ENCODE measurements at regions of chr6 and their contacts with region 1.

Region 1: GRCh38 chr6:125191916-125192609 is 38.5 kb downstream of the TPD52L1 start:
- DNase-seq: peak; percentile 52 to 66
- H3K4me3 ChIP-seq: no peak overlapping the region
- H3K4me3 Mint-ChIP-seq: no peak overlapping the region
- H3K27ac Mint-ChIP-seq: no peak overlapping the region
- H3K4me1 ChIP-seq: peaks cover 17% of the 10 kb centered on the region
- H3K4me1 Mint-ChIP-seq: no peaks in the 10 kb centered on the region
- H3K27me3 ChIP-seq: no peaks in the 10 kb centered on the region
- H3K27me3 Mint-ChIP-seq: no peaks in the 10 kb centered on the region
- CTCF ChIP-seq: peak; percentile 59 to 67

Region 2: DNA sequence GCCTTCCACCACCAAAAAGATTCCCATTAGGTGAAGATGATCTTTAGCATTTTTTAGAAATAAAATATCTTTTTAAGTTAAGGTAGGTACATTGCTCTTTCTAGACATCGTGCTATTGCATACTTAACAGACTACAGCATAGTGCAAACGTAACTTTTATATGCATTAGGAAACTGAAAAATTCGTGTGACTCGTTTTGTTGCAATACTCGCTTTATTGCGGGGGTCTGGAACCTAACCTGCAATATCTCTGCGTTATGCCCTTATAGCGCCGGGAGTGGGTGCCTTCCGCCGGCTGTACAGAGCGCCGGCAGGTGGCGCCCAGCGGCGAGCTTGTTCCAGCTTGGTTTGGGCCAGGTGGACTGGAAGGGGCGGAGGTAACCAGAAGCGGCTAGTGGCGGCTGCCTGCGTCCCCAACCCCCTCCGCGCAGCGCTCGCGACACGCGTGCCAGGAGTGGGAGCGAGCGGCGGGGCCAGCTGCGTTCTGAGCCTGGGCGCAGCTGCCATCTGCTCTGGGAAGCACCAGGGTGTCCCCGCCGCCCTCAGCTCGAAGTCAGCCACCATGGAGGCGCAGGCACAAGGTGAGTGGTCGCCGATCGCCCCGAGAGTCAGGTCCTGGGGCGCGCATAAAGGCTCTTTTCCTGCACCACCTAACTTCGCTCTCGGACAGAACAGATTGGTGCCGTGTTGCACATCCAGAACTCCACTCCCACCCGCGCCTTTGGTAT is 38.5 kb before region 1 on chr6 and contains the start of gene TPD52L1:
- CTCF ChIA-PET with region 1: interaction called, 3 read pairs
- POLR2A ChIA-PET with region 1: no interaction called
- intact Hi-C with region 1: loop called (anchors 2 kb)
- DNase-seq: peak; percentile 85
- H3K4me3 ChIP-seq: peak within 1 kb of the TSS; percentile 78
- H3K4me3 Mint-ChIP-seq: peak within 1 kb of the TSS; percentile 81
- H3K27ac Mint-ChIP-seq: peak within 1 kb of the TSS; percentile 42
- H3K4me1 ChIP-seq: no peaks in the 10 kb centered on the region
- H3K4me1 Mint-ChIP-seq: peaks cover 6% of the 10 kb centered on the region
- H3K27me3 ChIP-seq: no peaks in the 10 kb centered on the region
- H3K27me3 Mint-ChIP-seq: peaks cover 8% of the 10 kb centered on the region
- CTCF ChIP-seq: peak; percentile 79 to 97
- total RNA-seq, gene TPD52L1: 60.1 and 83.9 TPM in 2 replicates

Region 3: DNA sequence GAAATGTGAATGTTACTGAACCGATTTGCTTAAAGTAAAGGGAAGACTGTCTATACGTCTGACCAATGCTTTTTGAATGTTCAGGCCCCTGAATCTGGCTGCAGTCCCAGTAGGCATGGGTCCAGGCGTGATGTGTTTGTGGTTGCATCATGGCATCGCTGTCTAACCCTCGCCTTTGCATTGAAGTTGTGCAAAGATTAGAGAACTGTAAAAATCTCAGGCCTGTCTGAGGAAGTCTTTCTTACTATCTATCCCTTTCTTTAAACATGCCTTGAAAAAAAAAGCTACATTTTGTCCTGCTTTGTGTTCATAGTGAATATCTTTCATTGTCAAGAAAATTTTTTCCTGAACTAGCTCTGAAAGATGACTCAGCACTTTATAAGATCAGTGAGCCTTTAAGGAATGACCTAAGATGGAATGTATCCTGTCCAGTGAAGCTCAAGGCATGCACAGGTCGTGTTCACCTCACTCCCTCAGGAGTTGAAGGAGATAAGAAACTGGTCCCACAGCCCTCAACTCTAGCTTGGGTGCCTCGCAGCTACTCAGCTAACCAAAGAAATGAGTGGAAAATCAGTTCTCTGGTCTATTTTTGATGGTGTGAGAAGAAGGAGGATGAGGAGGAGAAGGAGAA is 10.0 kb after region 1 on chr6:
- CTCF ChIA-PET with region 1: interaction called, 3 read pairs
- POLR2A ChIA-PET with region 1: no interaction called
- intact Hi-C with region 1: loop called (anchors 1 kb)
- DNase-seq: peak; percentile 59 to 81
- H3K4me3 ChIP-seq: no peak overlapping the region
- H3K4me3 Mint-ChIP-seq: peak overlapping the region; percentile 25
- H3K27ac Mint-ChIP-seq: peak overlapping the region; percentile 55
- H3K4me1 ChIP-seq: peaks cover 36% of the 10 kb centered on the region
- H3K4me1 Mint-ChIP-seq: peaks cover 25% of the 10 kb centered on the region
- H3K27me3 ChIP-seq: no peaks in the 10 kb centered on the region
- H3K27me3 Mint-ChIP-seq: no peaks in the 10 kb centered on the region
- CTCF ChIP-seq: no peak

Region 4: GRCh38 chr6:125213939-125214338 is 21.9 kb after region 1 on chr6:
- CTCF ChIA-PET with region 1: no interaction called
- POLR2A ChIA-PET with region 1: no interaction called
- intact Hi-C with region 1: loop called (anchors 1 kb)
- DNase-seq: no peak
- H3K4me3 ChIP-seq: no peak overlapping the region
- H3K4me3 Mint-ChIP-seq: no peak overlapping the region
- H3K27ac Mint-ChIP-seq: no peak overlapping the region
- H3K4me1 ChIP-seq: peaks cover 4% of the 10 kb centered on the region; the same call in 1 of the 2 replicates
- H3K4me1 Mint-ChIP-seq: no peaks in the 10 kb centered on the region
- H3K27me3 ChIP-seq: no peaks in the 10 kb centered on the region
- H3K27me3 Mint-ChIP-seq: no peaks in the 10 kb centered on the region
- CTCF ChIP-seq: no peak

Region 5: DNA sequence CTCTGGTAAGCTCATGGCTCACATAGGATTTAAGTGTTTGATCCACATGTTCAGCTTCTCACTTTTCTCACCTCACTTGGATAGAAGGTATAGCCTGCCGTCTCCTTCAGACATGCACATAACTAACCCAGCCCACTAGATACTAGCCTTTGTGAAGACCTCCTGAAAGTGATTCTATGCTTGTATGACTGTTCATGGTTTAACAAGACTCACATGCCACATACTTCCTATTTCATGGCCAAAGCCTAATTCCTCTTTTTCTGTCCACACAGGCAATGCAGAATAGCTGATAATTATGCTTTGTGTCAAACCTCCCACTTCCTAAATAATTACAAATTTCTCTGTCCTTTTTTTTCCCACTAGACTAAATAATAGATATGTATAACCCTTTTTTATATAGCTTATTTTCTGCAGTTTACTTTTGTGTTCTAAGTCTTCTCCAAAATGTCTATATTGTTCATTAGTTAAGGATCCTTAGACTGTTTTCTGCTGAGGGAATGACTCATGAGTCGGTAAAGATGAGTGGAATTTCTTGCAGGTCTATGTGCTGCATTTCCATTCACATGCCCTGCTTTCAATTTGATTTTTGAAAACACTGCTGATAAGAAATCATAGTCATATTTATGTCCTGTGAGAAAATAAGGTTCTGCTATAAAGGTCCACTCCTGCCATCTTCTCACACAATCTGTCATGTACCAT is 66.7 kb after region 1 on chr6:
- CTCF ChIA-PET with region 1: no interaction called
- POLR2A ChIA-PET with region 1: no interaction called
- intact Hi-C with region 1: loop called (anchors 5 kb)
- DNase-seq: no peak
- H3K4me3 ChIP-seq: no peak overlapping the region
- H3K4me3 Mint-ChIP-seq: no peak overlapping the region
- H3K27ac Mint-ChIP-seq: no peak overlapping the region
- H3K4me1 ChIP-seq: no peaks in the 10 kb centered on the region
- H3K4me1 Mint-ChIP-seq: no peaks in the 10 kb centered on the region
- H3K27me3 ChIP-seq: no peaks in the 10 kb centered on the region
- H3K27me3 Mint-ChIP-seq: no peaks in the 10 kb centered on the region
- CTCF ChIP-seq: no peak

Region 6: DNA sequence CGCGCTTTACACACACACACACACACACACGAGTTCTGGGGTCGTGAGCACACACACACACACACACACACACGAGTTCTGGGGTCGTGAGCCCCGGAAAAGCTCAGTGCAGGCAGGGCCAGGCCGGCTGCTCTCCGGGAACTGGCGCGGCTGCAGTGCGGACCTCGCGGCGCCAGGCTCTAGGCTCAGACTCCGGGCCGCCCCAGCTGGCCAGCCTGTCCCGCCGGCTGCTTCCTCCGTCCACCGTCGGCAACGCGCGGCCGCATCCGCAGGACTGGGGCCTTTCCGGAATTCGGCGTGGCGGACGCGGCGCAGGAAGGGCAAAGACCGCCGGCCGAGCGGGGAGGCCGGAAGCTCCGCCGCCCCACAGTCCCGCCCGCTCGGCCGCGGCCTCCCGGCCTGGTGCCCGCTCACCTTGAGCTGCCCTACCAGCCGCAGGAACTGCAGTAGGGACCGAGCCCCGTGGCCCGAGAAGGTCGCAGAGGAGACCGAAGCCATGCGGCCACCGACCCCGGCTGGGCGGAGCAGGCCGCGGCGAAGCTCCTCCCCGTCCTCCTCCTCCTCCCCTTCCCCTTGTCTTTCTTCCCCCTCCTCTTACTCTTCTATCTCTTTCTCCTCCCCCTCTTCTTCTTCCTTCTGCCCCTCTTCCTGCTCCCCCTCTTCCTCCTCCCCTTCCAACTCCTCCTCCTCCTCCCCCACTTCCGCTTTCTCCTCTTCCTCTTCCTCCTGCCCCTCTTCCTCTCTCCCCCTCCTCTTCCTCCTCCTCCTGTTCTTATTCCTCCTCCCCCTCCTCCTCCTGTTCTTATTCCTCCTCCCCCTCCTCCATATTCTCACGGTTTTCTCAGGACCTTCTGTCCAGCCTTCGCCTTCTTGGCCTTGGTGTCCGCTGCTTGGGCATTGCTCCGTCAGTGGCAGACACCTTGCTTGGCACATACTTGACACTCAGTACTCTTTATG is 109.7 kb after region 1 on chr6 and contains the start of gene HDDC2:
- CTCF ChIA-PET with region 1: no interaction called
- POLR2A ChIA-PET with region 1: no interaction called
- intact Hi-C with region 1: loop called (anchors 2 kb)
- DNase-seq: peak; percentile 72 to 81
- H3K4me3 ChIP-seq: peak within 1 kb of the TSS; percentile 64
- H3K4me3 Mint-ChIP-seq: peak within 1 kb of the TSS; percentile 90
- H3K27ac Mint-ChIP-seq: peak within 1 kb of the TSS; percentile 88
- H3K4me1 ChIP-seq: peaks cover 12% of the 10 kb centered on the region
- H3K4me1 Mint-ChIP-seq: peaks cover 23% of the 10 kb centered on the region
- H3K27me3 ChIP-seq: no peaks in the 10 kb centered on the region
- H3K27me3 Mint-ChIP-seq: no peaks in the 10 kb centered on the region
- CTCF ChIP-seq: no peak
- total RNA-seq, gene HDDC2: 62.1 and 66.5 TPM in 2 replicates

Region 7: GRCh38 chr6:125307150-125307838 is 115.2 kb after region 1 on chr6:
- CTCF ChIA-PET with region 1: no interaction called
- POLR2A ChIA-PET with region 1: no interaction called
- intact Hi-C with region 1: loop called (anchors 1 kb)
- DNase-seq: peak; percentile 61 to 69
- H3K4me3 ChIP-seq: no peak overlapping the region
- H3K4me3 Mint-ChIP-seq: peak overlapping the region; percentile 28
- H3K27ac Mint-ChIP-seq: peak overlapping the region; percentile 37
- H3K4me1 ChIP-seq: peaks cover 31% of the 10 kb centered on the region
- H3K4me1 Mint-ChIP-seq: peaks cover 24% of the 10 kb centered on the region
- H3K27me3 ChIP-seq: no peaks in the 10 kb centered on the region
- H3K27me3 Mint-ChIP-seq: no peaks in the 10 kb centered on the region
- CTCF ChIP-seq: no peak